GM12878 (cell line): ENCODE measurements at regions of chr7 and their contacts with region 1.

Region 1: DNA sequence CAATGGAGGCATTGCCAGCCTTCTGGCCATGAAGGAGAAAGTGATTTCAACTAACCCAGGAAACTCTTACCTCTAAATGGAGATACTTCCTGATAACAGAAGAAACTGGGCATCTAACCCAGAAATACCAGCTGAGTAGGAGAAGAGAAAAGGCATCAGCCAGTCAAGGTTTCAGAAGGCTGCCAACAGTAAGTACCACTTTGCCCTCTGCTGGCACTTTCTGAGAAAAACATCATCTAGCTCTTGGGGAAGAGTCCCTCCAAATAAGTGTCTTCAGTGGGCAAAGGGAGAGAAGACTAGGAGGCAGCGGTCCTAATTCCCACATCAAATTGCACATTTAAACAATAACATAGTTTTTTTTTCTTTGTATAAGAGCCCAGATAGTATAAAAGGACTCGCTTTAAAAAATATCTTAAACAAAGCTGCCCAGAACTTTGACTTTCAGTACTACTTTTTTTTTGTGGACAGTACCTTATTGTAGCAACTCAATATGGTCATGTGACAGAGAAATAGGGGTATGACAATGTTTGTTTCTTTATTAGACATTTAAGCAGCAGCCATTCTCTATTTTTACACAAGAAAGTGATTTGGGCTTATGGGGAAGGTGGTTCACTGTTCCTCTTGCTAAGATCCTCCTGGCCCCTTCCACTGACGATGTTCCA is 157.3 kb downstream of the CTTNBP2 start:
- DNase-seq: no peak
- ATAC-seq: peak; percentile 95
- H3K4me3 ChIP-seq: no peak overlapping the region
- H3K27ac ChIP-seq: no peak overlapping the region
- H3K4me1 ChIP-seq: no peaks in the 10 kb centered on the region
- H3K27me3 ChIP-seq: no peaks in the 10 kb centered on the region
- CTCF ChIP-seq: peak; percentile 59 to 74 (median 68)
- EP300 ChIP-seq: no peak
- POLR2A ChIP-seq: no peak
- RAD21 ChIP-seq: peak; percentile 86

Region 2: DNA sequence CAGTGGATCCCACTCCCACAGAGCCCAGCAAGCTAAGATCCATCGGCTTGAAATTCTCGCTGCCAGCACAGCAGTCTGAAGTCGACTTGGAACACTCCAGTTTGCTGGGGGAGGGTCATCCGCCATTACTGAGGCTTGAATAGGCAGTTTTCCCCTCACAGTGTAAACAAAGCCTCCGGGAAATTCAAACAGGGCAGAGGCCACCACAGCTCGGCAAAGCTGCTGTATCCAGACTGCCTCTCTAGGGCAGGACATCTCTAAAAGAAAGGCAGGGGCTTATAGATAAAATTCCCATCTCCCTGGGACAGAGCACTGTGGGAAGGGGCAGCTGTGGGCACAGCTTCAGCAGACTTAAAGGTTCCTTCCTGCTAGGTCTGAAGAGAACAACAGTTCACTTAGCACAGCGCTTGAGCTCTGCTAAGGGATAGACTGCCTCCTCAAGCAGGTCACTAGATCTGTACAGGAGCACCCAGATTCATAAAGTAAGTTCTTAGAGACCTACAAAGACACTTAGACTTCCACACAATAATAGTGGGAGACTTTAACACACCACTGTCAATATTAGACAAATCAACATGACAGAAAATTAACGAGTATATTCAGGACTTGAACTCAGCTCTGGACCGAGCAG is 1826.4 kb before region 1 on chr7:
- CTCF ChIA-PET with region 1: no interaction called
- POLR2A ChIA-PET with region 1: no interaction called
- RAD21 ChIA-PET with region 1: no interaction called
- SMC1A ChIA-PET with region 1: no interaction called
- in situ Hi-C with region 1: no loop called
- intact Hi-C with region 1: no loop called
- DNase-seq: no peak
- ATAC-seq: no peak
- H3K4me3 ChIP-seq: no peak overlapping the region
- H3K27ac ChIP-seq: no peak overlapping the region
- H3K4me1 ChIP-seq: no peaks in the 10 kb centered on the region
- H3K27me3 ChIP-seq: no peaks in the 10 kb centered on the region
- CTCF ChIP-seq: no peak
- EP300 ChIP-seq: no peak
- POLR2A ChIP-seq: no peak
- RAD21 ChIP-seq: no peak

Region 3: GRCh38 chr7:116953727-116954442 is 762.0 kb before region 1 on chr7:
- CTCF ChIA-PET with region 1: no interaction called
- POLR2A ChIA-PET with region 1: no interaction called
- RAD21 ChIA-PET with region 1: no interaction called
- SMC1A ChIA-PET with region 1: no interaction called
- in situ Hi-C with region 1: no loop called
- intact Hi-C with region 1: no loop called
- DNase-seq: no peak
- ATAC-seq: peak; percentile 21
- H3K4me3 ChIP-seq: peak overlapping the region; percentile 79
- H3K27ac ChIP-seq: peak overlapping the region; percentile 98
- H3K4me1 ChIP-seq: peaks cover 22% of the 10 kb centered on the region
- H3K27me3 ChIP-seq: no peaks in the 10 kb centered on the region
- CTCF ChIP-seq: no peak
- EP300 ChIP-seq: peak in 1 of 2 experiments; percentile 19; a peak in 1 of 4 replicates
- POLR2A ChIP-seq: peak; percentile 62
- RAD21 ChIP-seq: no peak

Region 4: DNA sequence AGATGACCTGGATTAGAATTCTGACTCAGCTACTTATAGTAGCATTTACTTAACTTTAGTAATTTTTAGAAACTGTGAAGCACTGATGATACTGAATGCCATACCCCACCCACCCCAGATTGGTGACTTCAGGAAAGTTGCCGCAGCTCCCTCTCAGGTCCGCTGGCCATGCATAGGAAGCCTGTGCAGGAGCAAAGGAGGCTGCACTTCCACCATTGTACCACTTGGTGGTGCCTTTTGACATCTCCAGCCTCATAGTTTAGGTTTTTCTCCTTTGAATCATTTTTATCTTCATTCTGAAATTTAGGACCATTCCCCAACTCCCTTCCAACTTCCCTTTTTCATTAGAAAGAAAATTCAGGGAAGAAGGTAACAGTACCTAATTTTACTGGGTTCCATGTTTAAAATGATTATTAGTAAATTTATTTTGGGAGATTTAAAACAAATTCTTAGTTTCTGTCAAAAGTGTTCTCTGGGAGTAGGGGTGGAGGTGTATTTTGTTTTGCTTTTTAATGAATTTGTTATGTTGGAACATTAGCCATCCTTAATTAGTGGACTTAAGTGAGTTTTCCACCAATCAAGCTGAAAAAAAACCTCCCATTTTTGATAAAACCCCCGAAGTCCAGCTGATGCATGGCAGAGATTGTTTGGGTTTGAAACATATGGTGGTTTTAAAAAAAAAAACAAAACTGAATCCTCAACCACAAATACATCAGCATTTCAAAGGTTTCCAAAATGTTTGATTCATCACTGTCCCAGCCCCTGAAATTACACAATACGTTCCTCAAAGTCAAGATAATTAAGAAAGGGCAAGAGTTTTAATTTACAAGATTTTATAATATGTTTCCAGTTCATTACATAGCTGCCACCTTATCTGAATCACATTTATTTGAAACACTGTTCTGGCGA is 502.7 kb before region 1 on chr7:
- CTCF ChIA-PET with region 1: interaction called, 6 read pairs
- POLR2A ChIA-PET with region 1: no interaction called
- RAD21 ChIA-PET with region 1: interaction called, 6 read pairs
- SMC1A ChIA-PET with region 1: no interaction called
- in situ Hi-C with region 1: no loop called
- intact Hi-C with region 1: loop called (anchors 5 kb)
- DNase-seq: peak; percentile 42
- ATAC-seq: peak; percentile 88
- H3K4me3 ChIP-seq: no peak overlapping the region
- H3K27ac ChIP-seq: no peak overlapping the region
- H3K4me1 ChIP-seq: no peaks in the 10 kb centered on the region
- H3K27me3 ChIP-seq: no peaks in the 10 kb centered on the region
- CTCF ChIP-seq: peak; percentile 88 to 97 (median 92)
- EP300 ChIP-seq: no peak
- POLR2A ChIP-seq: no peak
- RAD21 ChIP-seq: peak; percentile 87

Region 5: GRCh38 chr7:117405519-117405918 is 310.4 kb before region 1 on chr7:
- CTCF ChIA-PET with region 1: interaction called, 127 read pairs
- POLR2A ChIA-PET with region 1: no interaction called
- RAD21 ChIA-PET with region 1: interaction called, 89 read pairs
- SMC1A ChIA-PET with region 1: interaction called, 113 read pairs
- in situ Hi-C with region 1: no loop called
- intact Hi-C with region 1: no loop called
- DNase-seq: no peak
- ATAC-seq: no peak
- H3K4me3 ChIP-seq: no peak overlapping the region
- H3K27ac ChIP-seq: no peak overlapping the region
- H3K4me1 ChIP-seq: no peaks in the 10 kb centered on the region
- H3K27me3 ChIP-seq: no peaks in the 10 kb centered on the region
- CTCF ChIP-seq: no peak
- EP300 ChIP-seq: no peak
- POLR2A ChIP-seq: no peak
- RAD21 ChIP-seq: no peak

Region 6: DNA sequence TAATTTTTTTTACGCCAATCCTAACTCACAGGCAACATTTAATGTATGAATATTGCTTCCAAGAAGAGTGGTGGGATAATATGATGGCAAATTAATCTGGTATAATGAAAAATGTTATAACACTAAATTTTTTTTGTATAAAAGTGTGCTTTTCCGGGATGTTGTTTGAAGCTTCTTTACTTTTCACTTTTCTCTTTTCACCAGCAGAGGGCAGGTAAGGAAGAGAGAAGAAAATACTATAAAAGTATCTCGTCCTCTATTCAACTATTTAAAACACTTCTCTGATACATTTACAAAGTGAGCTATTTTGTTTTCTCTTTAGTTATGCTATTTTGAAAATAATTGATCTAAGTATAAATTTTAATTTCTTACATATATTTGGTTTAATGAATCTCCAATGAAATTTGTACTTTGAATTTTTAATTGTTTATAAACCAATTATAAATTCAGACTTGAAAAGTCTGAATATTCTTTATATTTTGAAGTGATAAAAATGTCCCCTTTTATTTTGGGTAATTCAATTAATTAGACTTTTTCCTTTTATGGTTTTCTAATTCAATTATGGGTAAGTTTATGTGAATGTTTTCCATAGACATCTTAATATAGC is 256.8 kb before region 1 on chr7:
- CTCF ChIA-PET with region 1: interaction called, 61 read pairs
- POLR2A ChIA-PET with region 1: no interaction called
- RAD21 ChIA-PET with region 1: interaction called, 52 read pairs
- SMC1A ChIA-PET with region 1: interaction called, 53 read pairs
- in situ Hi-C with region 1: loop called (anchors 5 kb)
- intact Hi-C with region 1: loop called (anchors 1 kb)
- DNase-seq: no peak
- ATAC-seq: peak; percentile 61
- H3K4me3 ChIP-seq: no peak overlapping the region
- H3K27ac ChIP-seq: no peak overlapping the region
- H3K4me1 ChIP-seq: no peaks in the 10 kb centered on the region
- H3K27me3 ChIP-seq: no peaks in the 10 kb centered on the region
- CTCF ChIP-seq: peak; percentile 38 to 56 (median 51); a peak in 5 of 6 replicates
- EP300 ChIP-seq: no peak
- POLR2A ChIP-seq: no peak
- RAD21 ChIP-seq: peak; percentile 71

Region 7: DNA sequence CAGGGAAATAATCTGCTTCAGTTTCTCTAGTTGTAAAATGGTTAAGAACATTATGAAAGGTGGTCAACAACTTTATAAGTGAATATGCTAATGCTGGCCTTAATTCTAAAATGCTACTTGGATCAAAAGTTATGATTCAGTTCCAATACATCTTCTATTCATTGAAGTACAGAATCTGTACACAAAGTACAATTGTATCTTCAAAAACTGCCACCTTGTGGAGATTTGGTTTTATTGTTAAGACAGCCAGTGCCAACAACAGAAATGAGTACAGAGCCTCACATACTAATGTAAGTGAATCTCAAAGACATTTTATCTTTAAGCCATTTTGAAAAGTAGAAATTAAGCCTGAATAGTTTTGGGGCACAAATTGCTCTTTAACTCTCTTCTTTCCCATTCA is 42.1 kb before region 1 on chr7:
- CTCF ChIA-PET with region 1: interaction called, 13 read pairs
- POLR2A ChIA-PET with region 1: no interaction called
- RAD21 ChIA-PET with region 1: interaction called, 12 read pairs
- SMC1A ChIA-PET with region 1: interaction called, 11 read pairs
- in situ Hi-C with region 1: no loop called
- intact Hi-C with region 1: no loop called
- DNase-seq: no peak
- ATAC-seq: peak; percentile 93
- H3K4me3 ChIP-seq: no peak overlapping the region
- H3K27ac ChIP-seq: no peak overlapping the region
- H3K4me1 ChIP-seq: no peaks in the 10 kb centered on the region
- H3K27me3 ChIP-seq: no peaks in the 10 kb centered on the region; a peak in 1 of 4 replicates
- CTCF ChIP-seq: peak; percentile 11 to 51 (median 29); a peak in 4 of 6 replicates
- EP300 ChIP-seq: no peak
- POLR2A ChIP-seq: no peak
- RAD21 ChIP-seq: peak; percentile 53; the same call in 1 of the 2 replicates

Region 8: DNA sequence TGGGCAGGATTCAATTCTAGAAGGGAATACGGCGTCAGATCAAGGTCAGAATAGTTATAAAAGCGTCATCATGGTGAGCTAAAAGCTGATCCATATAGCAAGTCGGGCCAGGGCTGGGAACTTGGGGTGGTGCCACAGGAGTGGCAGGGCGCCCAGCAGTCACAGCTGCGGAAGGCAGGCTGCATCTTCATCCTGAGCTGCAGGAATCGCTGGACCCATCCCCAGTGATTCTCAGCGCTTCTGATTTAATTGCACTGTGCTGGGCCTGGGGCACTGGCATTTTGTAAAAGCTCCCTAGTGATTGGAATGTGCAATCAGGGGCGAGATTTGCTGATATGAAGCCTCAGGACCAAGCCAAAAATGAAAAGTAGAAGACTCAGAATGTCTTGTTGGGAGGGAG is 22.0 kb after region 1 on chr7:
- CTCF ChIA-PET with region 1: interaction called, 11 read pairs
- POLR2A ChIA-PET with region 1: no interaction called
- RAD21 ChIA-PET with region 1: interaction called, 4 read pairs
- SMC1A ChIA-PET with region 1: interaction called, 19 read pairs
- in situ Hi-C with region 1: no loop called
- intact Hi-C with region 1: no loop called
- DNase-seq: no peak
- ATAC-seq: no peak
- H3K4me3 ChIP-seq: no peak overlapping the region
- H3K27ac ChIP-seq: no peak overlapping the region
- H3K4me1 ChIP-seq: no peaks in the 10 kb centered on the region
- H3K27me3 ChIP-seq: no peaks in the 10 kb centered on the region; a peak in 2 of 4 replicates
- CTCF ChIP-seq: no peak
- EP300 ChIP-seq: no peak
- POLR2A ChIP-seq: no peak
- RAD21 ChIP-seq: no peak

Region 9: DNA sequence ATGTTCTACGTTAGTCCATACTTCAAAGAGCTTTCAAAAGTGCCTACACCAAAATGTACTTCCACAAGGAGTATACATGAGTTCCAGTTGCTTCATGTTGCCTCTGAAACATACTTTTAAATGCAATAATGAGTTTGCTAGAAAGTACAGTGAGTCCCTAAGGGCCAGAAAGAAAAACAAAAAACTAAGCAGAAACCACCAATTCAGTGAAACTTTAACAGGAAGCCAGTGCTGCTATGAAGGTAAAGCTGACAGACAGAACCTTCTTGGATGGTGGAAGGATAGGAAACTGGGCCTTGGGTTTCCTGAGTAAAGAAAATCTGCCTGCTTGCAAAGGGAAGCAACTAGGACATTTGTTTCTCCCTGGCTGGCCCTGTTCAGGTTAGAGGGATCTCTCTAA is 53.2 kb after region 1 on chr7:
- CTCF ChIA-PET with region 1: no interaction called
- POLR2A ChIA-PET with region 1: no interaction called
- RAD21 ChIA-PET with region 1: no interaction called
- SMC1A ChIA-PET with region 1: no interaction called
- in situ Hi-C with region 1: no loop called
- intact Hi-C with region 1: no loop called
- DNase-seq: no peak
- ATAC-seq: 0 out of 3 replicates have a peak, but pooled peaks have one; percentile 11
- H3K4me3 ChIP-seq: no peak overlapping the region
- H3K27ac ChIP-seq: no peak overlapping the region
- H3K4me1 ChIP-seq: peaks cover 17% of the 10 kb centered on the region
- H3K27me3 ChIP-seq: no peaks in the 10 kb centered on the region; a peak in 1 of 4 replicates
- CTCF ChIP-seq: no peak
- EP300 ChIP-seq: no peak
- POLR2A ChIP-seq: no peak
- RAD21 ChIP-seq: no peak